Gastrocnemius medialis (tissue), 4 donors: ENCODE measurements at regions of chr7 and their contacts with region 1.

Region 1: DNA sequence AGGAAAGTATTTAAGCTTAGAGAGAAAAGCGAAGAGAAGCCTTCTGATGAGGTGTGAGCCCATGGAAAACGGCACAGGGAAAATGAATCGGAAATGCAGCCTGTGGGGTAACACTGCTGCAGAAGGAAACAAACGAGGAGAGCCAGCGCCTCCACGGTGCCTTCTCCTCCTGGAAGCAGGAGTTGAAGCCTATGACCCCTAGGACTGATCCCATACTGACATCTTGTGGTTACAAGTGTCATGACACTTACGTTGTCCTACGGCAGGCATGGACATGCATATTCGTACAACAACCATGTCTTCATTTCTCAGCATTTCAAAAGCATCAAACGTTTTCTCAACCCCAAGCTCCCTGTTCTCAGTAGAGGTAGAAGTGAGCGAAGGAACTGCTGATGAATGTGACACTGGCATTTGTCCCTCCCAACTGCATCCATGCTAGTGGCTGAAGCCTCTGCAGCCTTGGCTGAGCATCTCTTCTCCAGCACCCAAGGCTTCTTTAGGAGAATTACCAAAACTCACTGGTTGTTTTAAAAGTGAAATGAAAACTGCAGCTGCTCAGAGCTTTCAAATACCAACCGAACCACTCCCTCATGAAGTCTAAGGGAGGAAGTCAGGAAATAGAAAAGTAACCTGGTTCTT is 160.2 kb downstream of the JAZF1 start:
- DNase-seq: peak; percentile 56 to 76
- ATAC-seq: peak; percentile 83 to 89
- H3K4me3 ChIP-seq: no peak overlapping the region
- H3K27ac ChIP-seq: no peak overlapping the region
- H3K4me1 ChIP-seq: peaks cover 22 to 38% of the 10 kb centered on the region in 2 donors
- H3K27me3 ChIP-seq: no peaks in the 10 kb centered on the region
- CTCF ChIP-seq: peak; percentile 80 to 93 (median 87)
- POLR2A ChIP-seq: no peak

Region 2: DNA sequence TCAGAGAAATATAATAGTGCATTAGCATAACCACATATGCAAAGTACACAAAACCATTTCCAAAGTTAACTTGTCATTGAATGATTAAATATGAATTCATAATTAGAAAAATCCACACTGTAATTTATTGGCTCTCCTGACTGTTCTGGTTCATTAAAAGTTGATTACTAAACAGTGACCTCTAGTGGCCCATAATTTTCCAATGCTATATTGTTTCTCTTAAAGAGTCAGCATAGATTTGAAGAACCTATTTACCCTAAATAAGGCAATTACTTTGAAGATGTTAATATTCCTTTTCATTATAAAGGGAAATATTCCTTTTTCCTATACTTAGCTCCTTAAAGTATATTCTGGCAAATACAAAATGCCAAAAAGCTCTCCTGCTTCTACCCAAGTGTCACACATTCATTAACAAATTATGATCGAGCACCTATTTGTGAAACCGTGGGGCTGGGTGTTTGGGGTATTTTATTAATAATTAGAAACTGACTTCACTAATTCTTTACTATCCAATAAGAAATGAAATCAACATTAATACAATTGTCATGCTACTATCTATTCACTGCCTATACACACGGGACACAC is 444.0 kb before region 1 on chr7:
- in situ Hi-C with region 1: no loop called
- intact Hi-C with region 1: loop called (anchors 10 kb)
- DNase-seq: no peak
- ATAC-seq: peak in 1 of 2 donors; percentile 62
- H3K4me3 ChIP-seq: no peak overlapping the region
- H3K27ac ChIP-seq: no peak overlapping the region
- H3K4me1 ChIP-seq: no peaks in the 10 kb centered on the region
- H3K27me3 ChIP-seq: no peaks in the 10 kb centered on the region
- CTCF ChIP-seq: peak; percentile 37 to 64 (median 57)
- POLR2A ChIP-seq: no peak

Region 3: DNA sequence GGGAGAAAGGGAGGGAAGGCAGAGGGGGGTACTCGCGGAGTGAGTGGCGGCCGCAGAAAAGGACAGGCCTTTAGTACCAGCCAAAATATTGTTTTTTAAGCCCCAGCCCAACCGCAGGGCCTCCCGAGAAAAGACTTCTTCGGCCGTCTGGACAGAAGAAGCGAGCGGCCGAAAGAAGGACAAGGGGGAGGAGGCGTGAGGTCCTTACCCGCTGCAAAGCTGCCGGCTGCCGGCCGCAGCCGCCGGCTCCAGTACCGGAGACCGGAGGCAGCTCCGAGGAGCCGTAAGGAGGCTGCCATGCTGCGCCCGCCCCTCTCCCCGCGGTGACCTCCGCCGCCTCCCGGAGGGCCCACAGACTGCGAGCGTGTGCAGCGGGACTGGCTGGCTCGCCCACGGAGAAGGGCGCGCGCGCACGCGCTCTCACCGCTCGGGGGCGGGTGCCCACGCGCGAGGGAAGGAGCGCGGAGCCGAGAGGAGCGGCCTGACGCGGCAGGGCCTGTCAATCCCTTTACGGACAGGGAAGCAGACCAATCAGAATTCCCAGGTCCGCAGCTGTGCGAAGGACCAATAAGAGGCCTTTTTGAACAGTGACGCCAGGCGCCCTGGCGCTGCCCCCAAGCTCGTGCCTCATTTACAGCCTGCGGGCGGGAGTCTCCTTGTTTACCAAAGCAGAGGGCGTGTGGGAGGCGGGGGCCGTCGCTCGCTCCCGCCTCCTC is 357.8 kb before region 1 on chr7 and contains the start of gene HIBADH:
- in situ Hi-C with region 1: no loop called
- intact Hi-C with region 1: loop called (anchors 10 kb)
- DNase-seq: peak; percentile 99 to 100
- ATAC-seq: peak; percentile 96 to 98
- H3K4me3 ChIP-seq: peak within 1 kb of the TSS; percentile 73 to 99 (median 92)
- H3K27ac ChIP-seq: peak within 1 kb of the TSS; percentile 95 to 100 (median 97)
- H3K4me1 ChIP-seq: peaks cover 10 to 14% of the 10 kb centered on the region in 2 donors
- H3K27me3 ChIP-seq: no peaks in the 10 kb centered on the region
- CTCF ChIP-seq: peak; percentile 12 to 46 (median 29)
- POLR2A ChIP-seq: peak; percentile 96 to 99
- total RNA-seq, gene HIBADH: 42.2 to 56.4 (median 49.0) TPM

Region 4: DNA sequence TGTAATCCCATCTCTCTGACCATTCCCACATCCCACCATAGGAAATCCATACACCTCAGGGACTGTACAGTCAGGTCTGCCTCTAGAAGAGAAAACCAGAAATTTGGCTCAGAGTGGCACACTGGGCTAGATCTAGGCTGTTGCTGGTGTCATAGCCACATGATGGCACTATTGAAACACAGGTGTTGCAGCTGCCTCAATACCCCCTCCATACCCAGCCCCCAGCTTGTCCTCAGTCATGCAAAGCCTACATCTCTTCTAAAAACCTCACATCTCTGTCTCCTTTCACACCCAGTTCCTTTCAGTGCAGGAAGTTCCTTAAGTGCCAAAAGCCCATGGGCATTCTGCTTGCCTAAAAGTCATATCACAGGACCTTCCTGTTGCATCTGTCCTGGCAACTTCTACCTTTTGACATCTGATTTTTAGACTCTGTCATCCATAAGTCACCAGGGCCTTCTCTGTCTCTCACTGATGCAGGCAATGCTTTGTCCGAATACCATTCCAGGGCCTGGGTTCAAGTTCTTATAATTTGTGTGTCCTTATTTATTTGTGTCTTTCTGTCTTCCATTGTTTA is 330.7 kb before region 1 on chr7:
- in situ Hi-C with region 1: no loop called
- intact Hi-C with region 1: loop called (anchors 1 kb)
- DNase-seq: no peak
- ATAC-seq: peak in 1 of 2 donors; percentile 33
- H3K4me3 ChIP-seq: no peak overlapping the region
- H3K27ac ChIP-seq: no peak overlapping the region
- H3K4me1 ChIP-seq: no peaks in the 10 kb centered on the region
- H3K27me3 ChIP-seq: no peaks in the 10 kb centered on the region
- CTCF ChIP-seq: no peak
- POLR2A ChIP-seq: no peak

Region 5: GRCh38 chr7:27784393-27785053 is 235.9 kb before region 1 on chr7:
- in situ Hi-C with region 1: loop called in 1 of 4 experiments (anchors 25 kb)
- intact Hi-C with region 1: no loop called
- DNase-seq: no peak
- ATAC-seq: peak in 1 of 2 donors; percentile 18
- H3K4me3 ChIP-seq: no peak overlapping the region
- H3K27ac ChIP-seq: no peak overlapping the region
- H3K4me1 ChIP-seq: peaks cover 0 to 12% of the 10 kb centered on the region in 2 donors
- H3K27me3 ChIP-seq: no peaks in the 10 kb centered on the region
- CTCF ChIP-seq: peak; percentile 27 to 50 (median 36)
- POLR2A ChIP-seq: no peak

Region 6: GRCh38 chr7:27921081-27921836 is 99.2 kb before region 1 on chr7:
- in situ Hi-C with region 1: loop called in 2 of 4 experiments (anchors 10 kb)
- intact Hi-C with region 1: loop called (anchors 5 kb)
- DNase-seq: no peak
- ATAC-seq: peak; percentile 65 to 83
- H3K4me3 ChIP-seq: peak overlapping the region in 1 of 4 donors; percentile 31
- H3K27ac ChIP-seq: no peak overlapping the region
- H3K4me1 ChIP-seq: peaks cover 4 to 10% of the 10 kb centered on the region in 2 donors
- H3K27me3 ChIP-seq: no peaks in the 10 kb centered on the region
- CTCF ChIP-seq: peak in 4 of 5 experiments; percentile 16 to 48 (median 36)
- POLR2A ChIP-seq: no peak

Region 7: DNA sequence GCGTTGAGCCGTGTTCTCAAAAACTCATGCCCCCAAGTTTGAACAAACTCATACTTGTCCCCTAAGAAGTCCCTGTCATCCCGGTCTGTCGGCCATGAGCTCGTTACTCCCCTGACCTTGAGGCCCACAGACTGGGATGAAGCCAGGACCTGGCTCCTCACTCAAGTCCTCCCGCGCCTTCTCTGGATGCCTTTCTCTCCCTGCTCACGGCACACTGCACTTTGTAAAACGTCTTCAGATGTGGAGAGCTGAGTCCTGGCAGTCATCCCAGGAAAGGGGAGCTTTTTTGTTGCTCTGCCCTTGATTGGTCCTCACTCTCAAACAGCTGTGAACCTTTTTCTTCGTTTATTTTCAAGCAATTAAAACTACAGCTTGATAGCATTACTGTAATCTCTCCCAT is 49.4 kb after region 1 on chr7:
- in situ Hi-C with region 1: no loop called
- intact Hi-C with region 1: no loop called
- DNase-seq: peak in 1 of 2 donors; percentile 39
- ATAC-seq: no peak
- H3K4me3 ChIP-seq: no peak overlapping the region
- H3K27ac ChIP-seq: peak overlapping the region; percentile 6 to 49 (median 32)
- H3K4me1 ChIP-seq: peaks cover 6 to 13% of the 10 kb centered on the region in 2 donors
- H3K27me3 ChIP-seq: no peaks in the 10 kb centered on the region
- CTCF ChIP-seq: no peak
- POLR2A ChIP-seq: no peak